ENCODE measurements at regions of chr7 and their contacts with region 1.

Region 1: DNA sequence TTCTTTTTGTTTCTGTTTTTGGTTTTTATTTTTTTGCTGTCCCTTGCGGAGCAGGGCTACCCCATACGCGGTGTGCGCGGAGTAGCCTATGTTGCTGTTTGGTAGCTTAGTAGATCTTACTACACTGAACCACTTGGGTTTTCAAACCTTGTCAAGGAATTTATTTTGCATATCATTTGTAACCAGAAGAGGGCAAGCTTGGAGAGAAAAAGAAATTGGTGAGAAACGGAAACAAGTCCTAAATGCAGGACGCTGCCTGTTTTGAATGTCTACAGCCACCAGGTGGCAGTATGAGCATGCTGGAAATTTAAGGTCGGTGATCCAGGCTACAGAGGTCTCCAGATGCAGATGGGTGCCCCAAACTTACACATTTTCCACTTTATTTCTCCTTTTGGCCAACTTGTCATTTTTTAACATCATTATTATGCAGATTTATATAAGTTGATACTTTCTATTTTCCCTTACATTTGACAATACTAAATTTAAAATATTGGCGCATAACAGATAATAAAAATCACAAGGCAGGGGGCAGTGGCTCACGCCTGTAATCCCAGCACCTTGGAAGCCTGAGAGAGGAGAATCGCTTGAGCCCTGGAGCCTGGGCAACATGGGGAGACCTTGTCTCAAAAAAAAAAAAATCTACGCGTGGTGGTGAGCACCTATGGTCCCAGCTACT is 15.3 kb upstream of the TRA2A start:
- DNase-seq: peak; percentile 78
- H3K4me3 ChIP-seq: no peak overlapping the region
- H3K27ac ChIP-seq: no peak overlapping the region
- H3K4me1 ChIP-seq: no peaks in the 10 kb centered on the region
- H3K27me3 ChIP-seq: no peaks in the 10 kb centered on the region
- CTCF ChIP-seq: peak; percentile 95

Region 2: GRCh38 chr7:22814261-22815208 is 732.5 kb before region 1 on chr7:
- intact Hi-C with region 1: no loop called
- DNase-seq: no peak
- H3K4me3 ChIP-seq: no peak overlapping the region
- H3K27ac ChIP-seq: no peak overlapping the region
- H3K4me1 ChIP-seq: no peaks in the 10 kb centered on the region
- H3K27me3 ChIP-seq: no peaks in the 10 kb centered on the region
- CTCF ChIP-seq: no peak

Region 3: DNA sequence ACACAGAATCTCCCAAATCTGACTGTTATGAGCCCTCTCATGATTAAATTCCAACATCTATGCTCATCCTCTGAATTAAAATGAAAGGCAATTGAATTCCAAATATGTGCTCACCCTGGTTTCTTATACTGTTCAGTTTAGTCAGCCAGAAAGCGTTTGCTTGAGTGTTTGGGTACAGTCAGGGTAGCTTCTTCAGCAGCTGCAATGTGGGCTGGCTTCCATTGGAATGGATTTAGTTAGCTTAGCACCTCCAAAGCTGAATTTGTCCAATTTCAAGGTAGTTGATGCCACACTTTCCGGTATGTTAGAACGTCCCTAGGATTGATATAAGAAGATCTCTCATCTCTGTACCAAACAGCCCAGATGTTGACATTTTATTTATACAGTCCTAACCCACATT is 432.1 kb before region 1 on chr7:
- intact Hi-C with region 1: loop called (anchors 5 kb)
- DNase-seq: no peak
- H3K4me3 ChIP-seq: no peak overlapping the region
- H3K27ac ChIP-seq: no peak overlapping the region
- H3K4me1 ChIP-seq: no peaks in the 10 kb centered on the region
- H3K27me3 ChIP-seq: no peaks in the 10 kb centered on the region
- CTCF ChIP-seq: no peak

Region 4: DNA sequence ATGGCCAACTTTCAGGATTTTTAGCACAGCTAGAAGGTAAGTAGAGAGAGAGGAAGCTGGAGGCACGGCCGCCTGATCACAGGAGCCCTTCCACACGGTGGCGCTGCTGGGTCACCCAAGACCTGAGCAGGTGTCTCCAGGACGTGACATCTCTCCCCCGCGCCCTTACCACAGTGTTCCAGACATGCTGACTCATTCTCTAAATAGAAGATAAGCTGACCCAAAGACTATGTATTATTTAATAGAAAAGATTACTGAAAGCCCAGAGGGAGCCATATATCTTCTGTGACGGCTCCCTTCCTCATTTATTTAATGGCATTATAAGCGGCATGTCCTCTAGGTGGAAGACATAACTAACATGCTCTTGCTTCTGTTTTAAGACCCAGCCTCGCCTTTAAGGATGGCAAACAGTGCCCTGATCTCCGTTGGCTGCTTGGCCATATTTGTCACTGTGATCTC is 273.9 kb before region 1 on chr7:
- intact Hi-C with region 1: loop called (anchors 5 kb)
- DNase-seq: peak; percentile 93
- H3K4me3 ChIP-seq: no peak overlapping the region
- H3K27ac ChIP-seq: no peak overlapping the region
- H3K4me1 ChIP-seq: no peaks in the 10 kb centered on the region
- H3K27me3 ChIP-seq: no peaks in the 10 kb centered on the region
- CTCF ChIP-seq: peak; percentile 82

Region 5: GRCh38 chr7:23431702-23432199 is 115.3 kb before region 1 on chr7:
- intact Hi-C with region 1: loop called (anchors 5 kb)
- DNase-seq: no peak
- H3K4me3 ChIP-seq: no peak overlapping the region
- H3K27ac ChIP-seq: no peak overlapping the region
- H3K4me1 ChIP-seq: no peaks in the 10 kb centered on the region
- H3K27me3 ChIP-seq: no peaks in the 10 kb centered on the region
- CTCF ChIP-seq: no peak

Region 6: DNA sequence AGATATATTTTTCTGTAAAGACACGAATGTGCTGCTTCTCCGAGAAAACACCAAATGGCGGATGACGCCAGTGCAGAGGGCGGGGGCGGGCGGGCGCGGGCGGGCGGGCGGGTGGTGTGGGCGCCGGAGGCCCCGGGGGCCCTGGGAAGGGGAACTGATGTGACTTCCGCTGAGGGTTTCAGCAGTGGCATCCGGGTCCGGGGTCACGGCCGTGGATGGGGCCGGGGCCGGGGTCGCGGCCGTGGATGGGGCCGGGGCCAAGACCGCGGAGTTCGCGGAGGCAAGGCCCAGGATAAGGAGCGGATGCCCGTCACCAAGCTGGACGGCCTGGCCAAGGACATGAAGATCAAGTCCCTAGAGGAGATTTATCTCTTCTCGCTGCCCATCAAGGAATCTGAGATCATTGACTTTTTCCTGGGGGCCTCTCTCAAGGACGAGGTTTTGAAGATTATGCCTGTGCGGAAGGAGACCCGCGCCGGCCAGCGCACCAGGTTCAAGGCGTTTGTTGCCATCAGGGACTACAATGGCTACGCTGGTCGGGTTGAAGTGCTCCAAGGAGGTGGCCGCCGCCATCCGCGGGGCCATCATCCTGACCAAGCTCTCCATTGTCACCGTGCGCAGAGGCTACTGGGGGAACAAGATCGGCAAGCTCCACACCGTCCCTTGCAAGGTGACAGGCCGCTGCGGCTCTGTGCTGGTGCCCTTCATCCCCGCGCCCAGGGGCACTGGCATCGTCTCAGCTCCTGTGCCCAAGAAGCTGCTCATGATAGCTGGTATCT is 56.5 kb before region 1 on chr7:
- intact Hi-C with region 1: no loop called
- DNase-seq: peak; percentile 32
- H3K4me3 ChIP-seq: peak overlapping the region; percentile 33
- H3K27ac ChIP-seq: no peak overlapping the region
- H3K4me1 ChIP-seq: no peaks in the 10 kb centered on the region
- H3K27me3 ChIP-seq: no peaks in the 10 kb centered on the region
- CTCF ChIP-seq: no peak

Region 7: GRCh38 chr7:23712368-23713284 is 165.6 kb after region 1 on chr7:
- intact Hi-C with region 1: loop called (anchors 5 kb)
- DNase-seq: no peak
- H3K4me3 ChIP-seq: no peak overlapping the region
- H3K27ac ChIP-seq: no peak overlapping the region
- H3K4me1 ChIP-seq: no peaks in the 10 kb centered on the region
- H3K27me3 ChIP-seq: no peaks in the 10 kb centered on the region
- CTCF ChIP-seq: peak; percentile 33

Measured in colonic mucosa (tissue), 4 donors.